Ascending aorta (tissue), 2 donors: ENCODE measurements at regions of chr15 and their contacts with region 1.

Region 1: DNA sequence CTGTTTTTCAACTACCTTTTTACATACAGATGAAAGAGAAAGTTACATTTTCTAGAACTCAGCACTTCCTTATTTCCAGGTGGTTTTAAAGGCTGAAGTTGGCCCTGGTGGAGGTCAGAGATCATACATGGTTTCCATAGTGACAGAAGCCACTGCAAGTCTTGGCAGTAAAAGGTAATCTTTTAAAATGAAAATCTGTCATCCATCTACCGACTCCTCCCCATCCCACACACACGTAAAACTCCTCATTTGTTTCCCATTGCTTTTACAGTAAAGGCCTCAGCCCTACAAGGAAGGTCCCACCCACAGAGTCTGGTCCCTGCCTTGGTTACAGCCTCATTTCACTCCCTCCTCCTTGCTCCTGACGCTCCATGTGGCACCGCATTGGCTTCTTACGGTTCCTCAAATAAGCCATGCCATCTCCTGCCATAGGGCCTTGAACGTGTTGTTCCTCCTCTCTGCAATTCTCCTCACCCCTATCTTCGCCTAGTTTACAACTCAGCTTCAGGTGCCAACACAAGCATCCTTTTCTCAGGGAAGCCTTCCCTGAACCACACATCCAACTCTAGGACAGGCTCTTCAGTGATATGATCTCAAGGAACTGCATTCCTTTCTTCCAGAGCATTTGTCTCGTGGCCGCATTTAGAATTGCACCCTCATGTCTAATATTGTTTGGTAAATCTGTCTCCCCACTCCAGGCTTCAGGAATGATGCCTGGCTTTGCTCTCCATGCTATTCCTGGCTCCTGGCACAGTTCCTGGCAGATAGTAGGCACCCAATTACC is 2.7 kb downstream of the CYP19A1 start:
- DNase-seq: no peak
- H3K4me3 ChIP-seq: no peak overlapping the region
- H3K27ac ChIP-seq: peak overlapping the region; percentile 62 to 77
- H3K4me1 ChIP-seq: peaks cover 16 to 40% of the 10 kb centered on the region in 2 donors
- H3K27me3 ChIP-seq: no peaks in the 10 kb centered on the region
- CTCF ChIP-seq: peak in 1 of 3 experiments; percentile 15

Region 2: DNA sequence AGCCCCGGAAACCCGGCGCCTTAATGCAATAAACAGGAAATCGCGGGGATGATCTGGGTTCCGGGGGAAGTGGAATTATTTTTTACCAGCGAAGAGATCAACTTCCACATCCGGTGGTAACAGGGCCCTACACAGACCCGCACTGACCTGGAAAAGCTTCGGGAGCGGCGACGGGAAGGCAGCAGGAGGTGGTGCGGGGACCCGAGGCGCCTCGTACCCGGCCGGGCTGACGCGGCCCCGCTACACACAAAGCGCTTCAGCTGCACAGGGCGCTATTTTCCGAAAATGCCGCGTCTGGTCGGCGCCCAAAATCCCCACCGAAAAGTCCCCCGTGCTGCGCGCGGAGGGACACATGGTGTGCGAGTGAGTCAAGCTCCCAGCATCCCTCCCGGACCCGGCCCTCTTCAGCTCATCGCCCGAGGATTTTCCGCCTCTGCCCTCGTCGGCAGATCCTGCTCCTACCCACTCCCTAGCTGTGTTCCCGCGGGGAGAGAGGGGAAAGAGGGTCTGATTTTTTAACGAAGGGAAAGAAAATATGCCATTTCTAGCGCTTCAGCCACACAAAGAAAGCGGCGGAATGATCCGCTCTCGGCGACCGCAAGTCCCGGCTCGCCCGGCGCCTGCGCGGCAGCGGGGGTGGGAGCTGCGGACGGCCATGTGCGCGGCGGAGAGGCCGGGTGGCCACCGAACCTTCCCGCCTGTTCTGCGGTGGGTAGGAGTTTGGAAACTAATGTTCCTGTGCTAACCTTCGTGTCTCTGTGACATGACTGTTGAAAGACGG is 980.7 kb before region 1 on chr15 and contains the start of gene GABPB1:
- intact Hi-C with region 1: no loop called
- DNase-seq: peak; percentile 31 to 90
- H3K4me3 ChIP-seq: peak within 1 kb of the TSS; percentile 95 to 99
- H3K27ac ChIP-seq: peak within 1 kb of the TSS; percentile 99 to 100
- H3K4me1 ChIP-seq: peaks cover 12 to 36% of the 10 kb centered on the region in 2 donors
- H3K27me3 ChIP-seq: no peaks in the 10 kb centered on the region
- CTCF ChIP-seq: no peak
- total RNA-seq, gene GABPB1: 10.9 TPM

Region 3: GRCh38 chr15:51227940-51228783 is 107.6 kb before region 1 on chr15:
- intact Hi-C with region 1: loop called (anchors 5 kb)
- DNase-seq: peak; percentile 19 to 81
- H3K4me3 ChIP-seq: no peak overlapping the region
- H3K27ac ChIP-seq: peak overlapping the region; percentile 56
- H3K4me1 ChIP-seq: peaks cover 0 to 17% of the 10 kb centered on the region in 2 donors
- H3K27me3 ChIP-seq: no peaks in the 10 kb centered on the region
- CTCF ChIP-seq: no peak

Region 4: GRCh38 chr15:51260212-51260611 is 75.5 kb before region 1 on chr15:
- intact Hi-C with region 1: no loop called
- DNase-seq: no peak
- H3K4me3 ChIP-seq: no peak overlapping the region
- H3K27ac ChIP-seq: no peak overlapping the region
- H3K4me1 ChIP-seq: no peaks in the 10 kb centered on the region
- H3K27me3 ChIP-seq: no peaks in the 10 kb centered on the region
- CTCF ChIP-seq: no peak

Region 5: DNA sequence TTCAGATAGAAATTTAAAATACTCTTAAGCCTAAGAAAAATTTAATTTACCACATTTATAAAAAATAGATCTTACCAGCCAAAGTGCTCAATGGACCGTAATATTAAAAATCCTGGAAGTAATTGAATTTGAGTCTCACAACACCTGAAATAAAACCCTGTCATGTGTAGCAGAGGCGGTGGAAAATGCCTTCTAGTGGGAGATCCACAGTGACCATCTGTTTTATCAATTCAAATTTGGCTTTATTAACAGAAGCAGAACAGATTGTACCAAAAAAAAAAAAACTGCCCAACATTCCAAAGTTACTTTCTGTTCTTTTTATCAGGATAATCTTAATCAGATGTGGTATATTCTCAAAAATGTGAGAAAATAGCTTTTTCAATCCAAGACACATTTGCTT is 215.1 kb after region 1 on chr15:
- intact Hi-C with region 1: no loop called
- DNase-seq: no peak
- H3K4me3 ChIP-seq: no peak overlapping the region
- H3K27ac ChIP-seq: no peak overlapping the region
- H3K4me1 ChIP-seq: no peaks in the 10 kb centered on the region
- H3K27me3 ChIP-seq: no peaks in the 10 kb centered on the region
- CTCF ChIP-seq: no peak